GM10248 (cell line): ENCODE measurements at regions of chrX and their contacts with region 1.

Region 1: DNA sequence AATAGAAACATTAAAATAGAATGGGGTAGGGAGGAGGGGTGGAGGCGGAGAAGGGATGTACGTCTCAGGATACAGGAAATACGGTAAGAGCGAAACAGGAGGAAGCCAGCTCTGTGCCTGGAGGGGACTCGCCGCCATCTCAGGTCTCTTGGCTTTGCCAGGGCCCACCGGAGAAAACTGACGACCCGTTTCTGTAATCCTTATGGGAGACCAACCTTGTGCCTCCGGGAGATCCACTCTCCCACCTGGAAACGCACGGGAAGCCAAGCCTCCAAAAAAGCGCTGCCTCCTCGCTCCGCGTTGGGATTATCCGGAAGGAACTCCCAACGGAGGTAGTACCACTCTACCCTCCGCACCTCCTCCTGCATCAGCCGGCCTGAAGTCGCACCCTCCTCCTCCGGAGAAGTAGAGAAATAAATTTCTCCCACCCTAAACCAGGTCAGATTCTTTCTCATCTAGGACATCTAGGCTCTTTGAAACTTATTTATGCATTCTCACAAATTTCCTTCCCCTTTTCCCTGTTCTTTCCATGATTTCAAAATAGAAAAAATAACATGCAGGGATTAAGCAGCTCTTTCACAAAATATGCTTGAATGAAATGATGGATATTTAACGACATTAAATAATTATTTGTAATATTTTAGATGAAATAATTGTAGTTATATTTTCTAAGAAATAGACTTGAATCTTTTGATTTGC is at the start of gene NBDY:
- DNase-seq: peak; percentile 15
- CTCF ChIP-seq: no peak

Region 2: DNA sequence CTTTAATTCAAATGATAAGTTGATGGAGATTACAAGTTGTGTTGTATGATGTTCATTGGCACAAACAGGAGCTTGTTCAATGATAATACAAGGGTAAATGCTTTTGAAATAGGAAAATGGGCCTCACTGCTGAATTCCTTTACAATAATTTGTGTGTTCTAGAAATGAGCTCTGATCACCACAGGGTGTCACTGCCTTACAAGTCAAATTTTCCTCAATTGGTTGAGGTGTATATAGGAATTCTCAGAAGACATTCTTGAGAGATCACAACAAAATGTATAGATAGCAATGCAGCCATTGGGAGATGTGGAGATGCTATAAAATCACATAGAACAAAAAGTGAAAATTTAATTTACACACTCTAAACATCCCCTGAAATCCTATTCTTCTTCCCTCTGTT is 447.5 kb before region 1 on chrX:
- CTCF ChIA-PET with region 1: interaction called, 39 read pairs
- POLR2A ChIA-PET with region 1: no interaction called
- DNase-seq: no peak
- CTCF ChIP-seq: peak; percentile 15